CD8-positive, alpha-beta T cell (primary cell): ENCODE measurements at regions of chr2 and their contacts with region 1.

Region 1: GRCh38 chr2:136141510-136142149 is 23.7 kb upstream of the CXCR4 start:
- DNase-seq: peak in 1 of 9 experiments; percentile 14
- ATAC-seq: no peak
- H3K4me3 ChIP-seq: no peak overlapping the region
- H3K4me3 Mint-ChIP-seq: peak overlapping the region; percentile 30
- H3K27ac ChIP-seq: no peak overlapping the region
- H3K27ac Mint-ChIP-seq: peak overlapping the region; percentile 90
- H3K4me1 ChIP-seq: peaks cover 67% of the 10 kb centered on the region
- H3K4me1 Mint-ChIP-seq: peaks cover 70% of the 10 kb centered on the region
- H3K27me3 ChIP-seq: no peaks in the 10 kb centered on the region
- H3K27me3 Mint-ChIP-seq: no peaks in the 10 kb centered on the region
- CTCF ChIP-seq: no peak

Region 2: GRCh38 chr2:136154402-136154783 is 12.8 kb after region 1 on chr2:
- CTCF ChIA-PET with region 1: interaction called, 3 read pairs
- POLR2A ChIA-PET with region 1: interaction called, 5 read pairs
- intact Hi-C with region 1: loop called in 1 of 2 experiments (anchors 2 kb)
- DNase-seq: no peak
- ATAC-seq: no peak
- H3K4me3 ChIP-seq: no peak overlapping the region
- H3K4me3 Mint-ChIP-seq: no peak overlapping the region
- H3K27ac ChIP-seq: no peak overlapping the region
- H3K27ac Mint-ChIP-seq: no peak overlapping the region
- H3K4me1 ChIP-seq: no peaks in the 10 kb centered on the region
- H3K4me1 Mint-ChIP-seq: peaks cover 22% of the 10 kb centered on the region
- H3K27me3 ChIP-seq: no peaks in the 10 kb centered on the region
- H3K27me3 Mint-ChIP-seq: no peaks in the 10 kb centered on the region
- CTCF ChIP-seq: no peak

Region 3: GRCh38 chr2:136167721-136168475 is 26.3 kb after region 1 on chr2:
- CTCF ChIA-PET with region 1: interaction called, 3 read pairs
- POLR2A ChIA-PET with region 1: no interaction called
- intact Hi-C with region 1: loop called in 1 of 2 experiments (anchors 2 kb)
- DNase-seq: no peak
- ATAC-seq: no peak
- H3K4me3 ChIP-seq: no peak overlapping the region
- H3K4me3 Mint-ChIP-seq: no peak overlapping the region
- H3K27ac ChIP-seq: no peak overlapping the region
- H3K27ac Mint-ChIP-seq: no peak overlapping the region
- H3K4me1 ChIP-seq: peaks cover 13% of the 10 kb centered on the region
- H3K4me1 Mint-ChIP-seq: peaks cover 20% of the 10 kb centered on the region
- H3K27me3 ChIP-seq: no peaks in the 10 kb centered on the region
- H3K27me3 Mint-ChIP-seq: no peaks in the 10 kb centered on the region
- CTCF ChIP-seq: no peak

Region 4: GRCh38 chr2:136183097-136183496 is 41.5 kb after region 1 on chr2:
- CTCF ChIA-PET with region 1: no interaction called
- POLR2A ChIA-PET with region 1: interaction called, 4 read pairs
- intact Hi-C with region 1: loop called (anchors 5 kb)
- DNase-seq: no peak
- ATAC-seq: no peak
- H3K4me3 ChIP-seq: no peak overlapping the region
- H3K4me3 Mint-ChIP-seq: no peak overlapping the region
- H3K27ac ChIP-seq: no peak overlapping the region
- H3K27ac Mint-ChIP-seq: no peak overlapping the region
- H3K4me1 ChIP-seq: peaks cover 6% of the 10 kb centered on the region
- H3K4me1 Mint-ChIP-seq: peaks cover 24% of the 10 kb centered on the region
- H3K27me3 ChIP-seq: no peaks in the 10 kb centered on the region
- H3K27me3 Mint-ChIP-seq: no peaks in the 10 kb centered on the region
- CTCF ChIP-seq: no peak

Region 5: DNA sequence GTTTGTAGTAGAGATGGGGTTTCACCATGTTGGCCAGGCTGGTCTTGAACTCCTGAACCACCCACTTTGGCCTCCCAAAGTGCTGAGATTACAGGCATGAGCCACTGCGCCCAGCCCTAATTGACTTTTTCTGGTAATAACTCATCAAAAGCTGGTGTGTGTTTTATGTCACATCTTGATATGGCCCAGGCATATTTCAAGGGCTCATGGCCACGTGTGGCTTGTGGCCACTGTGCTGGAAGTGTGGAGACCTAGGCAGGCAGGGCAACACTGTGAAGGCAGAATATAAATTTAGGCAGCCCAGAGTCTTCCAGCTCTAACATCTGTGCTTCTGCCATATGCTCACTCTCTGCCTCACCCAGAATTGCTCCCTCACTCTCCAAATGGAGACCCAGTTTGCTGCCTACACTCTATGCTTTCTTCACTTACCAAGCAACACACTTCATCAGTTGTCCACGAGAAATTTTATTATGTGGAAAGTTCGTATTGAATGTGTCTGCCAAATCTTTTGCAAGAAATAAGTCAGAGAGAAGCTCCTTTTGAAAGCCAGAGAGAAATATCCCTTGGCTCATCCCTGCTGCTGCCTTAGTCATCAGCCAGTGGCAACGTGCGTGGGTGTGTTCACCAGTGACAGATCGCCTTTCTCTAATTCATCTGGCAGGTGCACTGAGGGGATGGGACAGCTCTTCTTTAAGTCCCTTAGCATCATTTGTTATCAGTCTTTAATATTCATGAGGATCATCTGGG is 105.7 kb after region 1 on chr2:
- CTCF ChIA-PET with region 1: no interaction called
- POLR2A ChIA-PET with region 1: no interaction called
- intact Hi-C with region 1: no loop called
- DNase-seq: no peak
- ATAC-seq: no peak
- H3K4me3 ChIP-seq: no peak overlapping the region
- H3K4me3 Mint-ChIP-seq: no peak overlapping the region
- H3K27ac ChIP-seq: no peak overlapping the region
- H3K27ac Mint-ChIP-seq: no peak overlapping the region
- H3K4me1 ChIP-seq: peaks cover 7% of the 10 kb centered on the region
- H3K4me1 Mint-ChIP-seq: peaks cover 16% of the 10 kb centered on the region
- H3K27me3 ChIP-seq: no peaks in the 10 kb centered on the region
- H3K27me3 Mint-ChIP-seq: no peaks in the 10 kb centered on the region
- CTCF ChIP-seq: no peak

Region 6: GRCh38 chr2:136444323-136444722 is 302.7 kb after region 1 on chr2:
- CTCF ChIA-PET with region 1: no interaction called
- POLR2A ChIA-PET with region 1: no interaction called
- intact Hi-C with region 1: no loop called
- DNase-seq: no peak
- ATAC-seq: no peak
- H3K4me3 ChIP-seq: no peak overlapping the region
- H3K4me3 Mint-ChIP-seq: no peak overlapping the region
- H3K27ac ChIP-seq: no peak overlapping the region
- H3K27ac Mint-ChIP-seq: no peak overlapping the region
- H3K4me1 ChIP-seq: no peaks in the 10 kb centered on the region
- H3K4me1 Mint-ChIP-seq: no peaks in the 10 kb centered on the region
- H3K27me3 ChIP-seq: peaks cover 0 to 3% of the 10 kb centered on the region in 2 experiments
- H3K27me3 Mint-ChIP-seq: peaks cover 14% of the 10 kb centered on the region
- CTCF ChIP-seq: no peak